OCI-LY7 (cell line): ENCODE measurements at regions of chr10 and their contacts with region 1.

Region 1: GRCh38 chr10:28295336-28295735 is 7.5 kb downstream of the MPP7 start:
- DNase-seq: no peak
- H3K4me3 ChIP-seq: peak overlapping the region; percentile 31
- H3K27ac ChIP-seq: no peak overlapping the region
- H3K4me1 ChIP-seq: peaks cover 57% of the 10 kb centered on the region
- CTCF ChIP-seq: no peak

Region 2: GRCh38 chr10:28151636-28152035 is 143.7 kb before region 1 on chr10:
- CTCF ChIA-PET with region 1: no interaction called
- POLR2A ChIA-PET with region 1: no interaction called
- intact Hi-C with region 1: no loop called
- DNase-seq: no peak
- H3K4me3 ChIP-seq: no peak overlapping the region
- H3K27ac ChIP-seq: no peak overlapping the region
- H3K4me1 ChIP-seq: no peaks in the 10 kb centered on the region
- CTCF ChIP-seq: no peak

Region 3: DNA sequence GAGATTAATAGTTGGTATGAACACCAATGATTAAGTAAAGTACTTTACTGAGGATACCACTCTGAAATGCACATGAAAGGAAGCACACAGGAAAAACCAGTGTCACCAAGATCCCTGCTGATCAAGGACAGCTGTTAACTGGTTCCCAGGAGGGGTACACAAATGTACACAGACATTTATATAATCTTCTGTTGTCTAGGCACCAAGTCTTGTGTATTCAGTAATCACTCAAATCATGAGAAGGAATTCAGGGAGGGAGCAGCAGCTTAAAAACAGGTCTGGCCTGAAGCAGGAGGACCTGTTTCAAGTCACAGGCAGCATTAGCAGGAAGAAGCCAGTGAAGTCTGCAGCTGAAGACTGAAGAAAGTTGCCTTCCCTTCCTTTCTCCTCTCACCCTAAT is 11.2 kb before region 1 on chr10:
- CTCF ChIA-PET with region 1: interaction called, 6 read pairs
- POLR2A ChIA-PET with region 1: interaction called, 14 read pairs
- intact Hi-C with region 1: no loop called
- DNase-seq: peak; percentile 45
- H3K4me3 ChIP-seq: peak overlapping the region; percentile 3
- H3K27ac ChIP-seq: peak overlapping the region; percentile 97
- H3K4me1 ChIP-seq: peaks cover 76% of the 10 kb centered on the region
- CTCF ChIP-seq: no peak